ENCODE measurements at regions of chr17 and their contacts with region 1.

Region 1: GRCh38 chr17:20992987-20993862 is 49.6 kb downstream of the USP22 start:
- DNase-seq: peak; percentile 67
- H3K4me3 ChIP-seq: no peak overlapping the region
- H3K27ac ChIP-seq: no peak overlapping the region
- H3K4me1 ChIP-seq: no peaks in the 10 kb centered on the region
- H3K27me3 ChIP-seq: no peaks in the 10 kb centered on the region
- CTCF ChIP-seq: peak; percentile 92

Region 2: GRCh38 chr17:20800146-20800545 is 193.1 kb before region 1 on chr17:
- intact Hi-C with region 1: loop called (anchors 10 kb)
- DNase-seq: no peak
- H3K4me3 ChIP-seq: no peak overlapping the region
- H3K27ac ChIP-seq: no peak overlapping the region
- H3K4me1 ChIP-seq: no peaks in the 10 kb centered on the region
- H3K27me3 ChIP-seq: no peaks in the 10 kb centered on the region
- CTCF ChIP-seq: no peak

Region 3: DNA sequence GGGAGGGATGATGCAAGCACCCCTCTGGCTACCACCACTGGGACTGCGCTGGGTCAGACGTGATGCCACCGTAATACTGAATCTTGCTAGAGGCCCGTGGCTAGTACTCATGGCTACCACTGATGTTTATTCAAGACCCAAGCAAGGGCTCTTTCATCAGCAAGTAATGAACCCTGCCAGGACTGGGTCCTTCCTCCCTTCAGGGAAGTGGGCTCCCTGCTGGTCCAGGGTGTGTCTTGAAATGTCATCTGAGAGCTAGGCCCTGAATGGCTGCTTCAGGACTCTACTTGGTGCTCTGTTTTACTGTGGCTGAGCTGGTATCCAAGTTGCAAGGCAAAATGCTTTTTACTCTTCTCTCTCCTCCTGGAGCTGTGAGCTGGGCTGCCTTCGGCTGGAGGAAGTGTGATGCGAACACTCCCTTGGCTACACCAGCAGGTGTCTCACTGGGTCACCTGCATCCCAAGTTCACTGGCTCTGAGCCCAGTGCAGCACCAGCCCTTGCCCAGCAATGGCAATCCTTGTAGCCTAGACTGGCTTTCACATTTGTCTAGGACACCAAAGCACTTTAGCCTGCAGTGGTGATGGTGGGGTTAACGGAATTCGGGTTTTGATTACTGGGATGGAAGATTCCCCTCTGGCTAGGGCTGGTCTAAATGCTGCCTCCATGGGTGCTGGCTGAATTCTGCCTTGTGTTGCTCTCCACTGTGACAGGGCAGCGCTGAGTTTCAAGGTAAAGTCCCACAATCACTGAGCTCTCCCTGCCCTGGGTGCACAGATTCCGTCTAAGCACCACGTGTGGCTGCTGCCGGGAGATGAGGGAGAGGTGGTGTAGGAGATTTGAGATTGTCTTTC is 49.0 kb before region 1 on chr17:
- intact Hi-C with region 1: loop called (anchors 5 kb)
- DNase-seq: peak; percentile 65
- H3K4me3 ChIP-seq: no peak overlapping the region
- H3K27ac ChIP-seq: no peak overlapping the region
- H3K4me1 ChIP-seq: no peaks in the 10 kb centered on the region
- H3K27me3 ChIP-seq: no peaks in the 10 kb centered on the region
- CTCF ChIP-seq: peak; percentile 49

Region 4: GRCh38 chr17:20955427-20956323 is 37.5 kb before region 1 on chr17:
- intact Hi-C with region 1: no loop called
- DNase-seq: peak; percentile 32
- H3K4me3 ChIP-seq: no peak overlapping the region
- H3K27ac ChIP-seq: no peak overlapping the region
- H3K4me1 ChIP-seq: no peaks in the 10 kb centered on the region
- H3K27me3 ChIP-seq: no peaks in the 10 kb centered on the region
- CTCF ChIP-seq: no peak

Region 5: DNA sequence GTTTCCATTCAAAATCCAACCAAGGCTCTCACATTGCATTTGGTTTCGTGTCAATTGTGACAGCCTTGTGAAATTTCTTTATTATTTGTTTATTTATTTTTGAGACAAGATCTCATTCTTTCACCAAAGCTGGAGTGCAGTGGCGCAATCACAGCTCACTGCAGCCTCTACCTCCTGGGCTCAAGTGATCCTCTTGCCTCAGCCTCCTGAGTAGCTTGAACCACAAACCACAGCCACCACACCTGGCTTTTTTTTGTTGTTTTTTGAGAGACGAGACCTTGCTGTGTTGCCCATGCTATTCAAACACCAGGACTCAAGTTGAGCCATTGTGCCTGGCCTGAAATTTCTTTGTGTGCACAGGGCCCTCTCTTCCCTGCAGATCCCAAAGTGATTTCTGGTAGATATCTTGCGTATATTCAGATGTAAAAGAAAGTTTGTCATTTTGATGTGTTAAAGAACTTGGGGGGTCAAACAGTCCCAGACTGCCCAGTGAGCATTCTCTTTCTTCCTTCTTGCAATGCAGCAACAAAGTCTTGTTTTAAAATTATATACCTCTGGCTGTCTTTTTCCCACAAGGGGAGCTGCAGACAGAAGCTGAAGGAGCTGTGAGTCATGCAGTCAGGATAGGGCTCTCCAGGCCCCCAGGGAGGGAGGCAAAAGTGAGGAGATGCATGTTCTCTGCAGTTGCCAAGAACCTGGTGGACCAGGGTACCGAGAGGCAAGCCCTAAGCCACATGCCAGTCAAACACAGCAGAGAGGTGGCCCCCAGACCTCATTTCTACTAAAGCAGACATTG is 65.1 kb after region 1 on chr17:
- intact Hi-C with region 1: no loop called
- DNase-seq: no peak
- H3K4me3 ChIP-seq: no peak overlapping the region
- H3K27ac ChIP-seq: no peak overlapping the region
- H3K4me1 ChIP-seq: no peaks in the 10 kb centered on the region
- H3K27me3 ChIP-seq: no peaks in the 10 kb centered on the region
- CTCF ChIP-seq: no peak

Measured in colonic mucosa (tissue), 4 donors.